Activated CD4-positive, alpha-beta T cell treated with anti-CD3 and anti-CD28 coated beads for 36 hours (primary cell): ENCODE measurements at regions of chr1 and their contacts with region 1.

Region 1: GRCh38 chr1:205227584-205228006 is at the start of gene TMCC2:
- DNase-seq: peak; percentile 92
- ATAC-seq: peak; percentile 81
- H3K4me3 Mint-ChIP-seq: peak within 1 kb of the TSS; percentile 89
- H3K27ac Mint-ChIP-seq: peak within 1 kb of the TSS; percentile 95
- H3K4me1 Mint-ChIP-seq: peaks cover 38% of the 10 kb centered on the region
- H3K27me3 Mint-ChIP-seq: peaks cover 14% of the 10 kb centered on the region
- total RNA-seq, gene TMCC2: 10.5 to 11.0 TPM

Region 2: DNA sequence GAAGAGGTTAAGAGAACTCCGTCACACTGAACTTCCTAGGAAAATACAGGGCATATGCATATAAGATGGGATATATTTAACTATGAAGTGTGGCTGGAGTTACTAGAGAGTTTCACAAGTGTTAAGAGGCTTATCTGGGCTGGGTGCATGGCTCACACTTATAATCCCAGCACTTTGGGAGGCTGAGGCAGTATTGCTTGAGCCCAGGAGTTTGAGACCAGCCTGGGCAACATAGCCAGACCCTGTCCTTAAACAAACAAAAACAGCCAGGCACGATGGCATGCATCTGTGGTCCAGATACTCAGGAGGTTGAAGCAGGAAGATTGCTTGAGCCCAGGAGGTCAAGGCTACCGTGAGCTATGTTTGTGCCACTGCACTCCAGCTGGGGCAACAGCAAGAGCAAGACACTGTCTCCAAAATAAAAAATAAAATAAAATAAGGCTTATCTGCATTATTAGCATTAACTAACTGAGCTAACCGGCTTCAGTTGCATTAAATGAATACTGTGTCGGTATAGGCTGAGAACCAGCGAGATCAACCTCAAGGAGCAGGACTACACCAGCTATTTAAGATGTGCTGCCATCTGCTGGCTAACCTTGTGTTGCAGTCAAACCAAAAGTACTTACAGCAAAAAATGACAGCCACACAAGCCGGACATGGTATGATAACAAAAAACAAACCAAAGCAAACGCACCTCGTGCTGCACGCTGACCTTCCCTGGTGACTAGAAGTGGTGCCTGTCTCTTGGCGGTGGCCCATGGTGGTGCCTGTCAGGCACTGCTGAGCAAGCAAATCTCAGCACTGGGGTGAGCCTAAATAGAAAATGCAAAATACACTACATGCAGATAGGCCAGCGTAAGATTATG is 86.1 kb before region 1 on chr1:
- CTCF ChIA-PET with region 1: interaction called, 17 read pairs
- POLR2A ChIA-PET with region 1: no interaction called
- intact Hi-C with region 1: no loop called
- DNase-seq: peak; percentile 88
- ATAC-seq: peak; percentile 96
- H3K4me3 Mint-ChIP-seq: no peak overlapping the region
- H3K27ac Mint-ChIP-seq: no peak overlapping the region
- H3K4me1 Mint-ChIP-seq: peaks cover 3% of the 10 kb centered on the region
- H3K27me3 Mint-ChIP-seq: no peaks in the 10 kb centered on the region

Region 3: DNA sequence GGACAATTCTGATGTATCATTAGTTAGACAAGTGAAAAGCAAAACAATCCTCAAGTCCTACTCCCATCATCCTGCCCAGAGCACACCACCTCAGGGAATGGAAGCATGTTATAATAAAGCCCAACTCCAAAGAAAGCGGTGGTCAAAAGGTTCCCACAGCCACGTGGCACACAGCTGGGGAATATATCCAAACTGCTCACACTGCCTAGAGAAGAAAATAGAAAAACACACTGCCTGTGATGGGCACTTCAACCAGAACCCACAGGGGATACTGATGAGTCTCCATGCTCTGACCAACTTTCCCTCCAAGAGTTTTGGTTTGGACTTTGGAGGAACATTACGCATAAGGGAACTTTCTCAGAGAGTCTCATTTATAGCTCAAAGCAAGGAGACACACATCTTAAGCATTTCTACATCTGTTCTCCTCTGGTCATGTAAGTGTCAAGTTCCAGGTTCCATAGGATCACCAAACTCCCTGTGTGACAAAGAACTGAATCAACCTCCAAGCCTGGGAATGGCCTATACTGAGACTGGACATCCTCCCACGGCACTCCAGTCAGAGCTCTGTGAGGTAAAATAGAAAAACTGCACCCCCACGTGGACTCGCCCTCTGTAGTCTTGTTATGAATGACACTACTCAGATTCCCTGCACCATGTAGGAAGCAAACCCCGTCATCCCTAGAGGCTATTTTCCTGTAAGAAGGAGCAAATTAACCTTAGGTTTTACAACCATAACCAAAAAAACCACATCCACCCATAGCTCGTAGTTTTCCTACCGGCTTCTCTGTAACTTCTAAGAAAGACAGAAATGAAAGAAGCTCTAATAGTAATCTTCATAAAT is 28.3 kb before region 1 on chr1:
- CTCF ChIA-PET with region 1: interaction called, 23 read pairs
- POLR2A ChIA-PET with region 1: interaction called, 4 read pairs
- intact Hi-C with region 1: loop called in 1 of 2 experiments (anchors 1 kb)
- DNase-seq: peak; percentile 67
- ATAC-seq: peak; percentile 63
- H3K4me3 Mint-ChIP-seq: peak overlapping the region; percentile 50
- H3K27ac Mint-ChIP-seq: peak overlapping the region; percentile 94
- H3K4me1 Mint-ChIP-seq: peaks cover 68% of the 10 kb centered on the region
- H3K27me3 Mint-ChIP-seq: no peaks in the 10 kb centered on the region

Region 4: GRCh38 chr1:205237526-205238484 is 10.2 kb after region 1 on chr1:
- CTCF ChIA-PET with region 1: interaction called, 52 read pairs
- POLR2A ChIA-PET with region 1: interaction called, 6 read pairs
- intact Hi-C with region 1: loop called (anchors 1 kb)
- DNase-seq: peak; percentile 82
- ATAC-seq: peak; percentile 89
- H3K4me3 Mint-ChIP-seq: peak overlapping the region; percentile 56
- H3K27ac Mint-ChIP-seq: peak overlapping the region; percentile 95
- H3K4me1 Mint-ChIP-seq: peaks cover 58% of the 10 kb centered on the region
- H3K27me3 Mint-ChIP-seq: no peaks in the 10 kb centered on the region

Region 5: DNA sequence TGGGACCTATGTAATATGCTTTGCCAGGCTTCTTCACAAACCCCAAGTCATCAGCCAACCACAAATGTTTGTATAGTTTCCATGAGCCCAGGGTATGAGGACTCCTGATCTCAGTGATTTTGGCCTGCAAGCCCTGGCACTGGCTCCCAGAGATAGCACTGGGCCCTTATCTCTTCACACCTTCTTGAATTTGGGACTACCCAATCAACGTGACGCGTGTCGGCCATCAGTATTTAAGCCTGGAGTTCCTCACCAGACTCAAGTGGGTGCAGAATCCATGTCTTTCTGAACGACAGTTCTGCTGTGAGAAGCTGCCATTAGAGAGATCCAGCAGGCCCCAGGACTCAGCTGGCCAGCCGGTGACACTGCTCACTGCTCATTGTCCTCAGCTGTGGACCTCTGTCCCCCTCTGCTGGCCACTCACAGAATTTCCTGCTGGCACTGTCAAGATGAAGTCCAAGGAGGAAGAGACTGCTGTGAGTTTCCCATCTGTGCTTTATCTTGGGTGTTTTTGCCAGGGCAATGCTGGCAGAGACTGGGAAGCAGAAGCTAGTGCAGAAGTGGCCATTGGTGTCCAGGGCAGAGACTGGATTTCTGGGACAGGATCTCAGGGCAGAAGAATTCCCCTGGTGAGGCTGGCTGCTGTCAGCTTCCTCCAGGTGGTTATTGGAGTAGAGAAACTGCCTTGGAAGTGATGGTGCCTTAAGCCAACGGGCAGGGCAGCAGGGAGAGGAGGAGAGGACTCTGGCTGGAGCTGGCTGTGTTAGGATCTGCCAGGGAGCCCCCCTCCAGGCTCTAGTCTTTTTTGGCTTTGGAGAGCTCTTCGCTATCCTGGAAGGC is 28.6 kb after region 1 on chr1:
- CTCF ChIA-PET with region 1: interaction called, 205 read pairs
- POLR2A ChIA-PET with region 1: interaction called, 4 read pairs
- intact Hi-C with region 1: loop called (anchors 1 kb)
- DNase-seq: peak; percentile 93
- ATAC-seq: peak; percentile 95
- H3K4me3 Mint-ChIP-seq: no peak overlapping the region
- H3K27ac Mint-ChIP-seq: no peak overlapping the region
- H3K4me1 Mint-ChIP-seq: peaks cover 2% of the 10 kb centered on the region
- H3K27me3 Mint-ChIP-seq: no peaks in the 10 kb centered on the region

Region 6: DNA sequence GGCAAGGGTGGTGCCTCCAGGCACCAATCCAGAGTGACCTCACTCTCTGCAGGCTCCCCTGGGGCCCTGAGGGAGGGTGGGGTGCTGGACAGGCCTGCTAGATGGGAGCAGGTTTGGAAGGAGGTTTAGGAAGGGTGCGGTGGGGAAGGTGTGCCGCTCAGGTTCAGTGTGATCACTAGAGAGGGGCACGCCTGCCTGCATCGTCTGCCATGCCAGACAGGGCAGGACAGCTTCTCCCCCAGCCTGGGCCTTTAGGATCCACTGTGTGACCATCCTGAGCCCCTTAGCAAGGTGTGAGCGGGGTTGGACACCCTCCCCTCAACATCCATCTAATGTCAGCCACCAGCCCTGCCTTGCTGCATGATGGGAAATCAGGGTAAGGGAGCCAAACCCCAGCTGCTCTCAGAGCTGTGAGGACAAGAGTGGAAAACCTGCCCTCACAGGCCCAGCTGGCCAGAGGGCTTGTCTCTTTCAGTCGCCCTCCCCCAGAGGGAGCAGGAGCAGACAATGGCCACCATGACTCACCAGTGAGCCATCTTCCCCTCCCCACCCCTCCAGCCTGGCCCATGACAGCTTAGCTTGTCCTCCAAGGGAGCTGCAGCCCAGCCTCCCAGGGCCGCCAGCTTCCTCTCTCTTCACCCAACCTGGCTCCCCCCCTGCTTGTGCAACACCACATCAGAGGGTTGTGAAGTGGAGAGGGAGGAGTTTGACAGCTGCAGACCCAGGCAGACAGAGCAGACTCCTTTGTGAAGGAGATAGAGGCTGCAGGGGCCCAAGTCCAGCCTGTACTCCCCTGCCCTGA is 56.9 kb after region 1 on chr1:
- CTCF ChIA-PET with region 1: interaction called, 16 read pairs
- POLR2A ChIA-PET with region 1: no interaction called
- intact Hi-C with region 1: no loop called
- DNase-seq: peak; percentile 92
- ATAC-seq: peak; percentile 73
- H3K4me3 Mint-ChIP-seq: peak overlapping the region; percentile 55
- H3K27ac Mint-ChIP-seq: peak overlapping the region; percentile 92
- H3K4me1 Mint-ChIP-seq: peaks cover 82% of the 10 kb centered on the region
- H3K27me3 Mint-ChIP-seq: no peaks in the 10 kb centered on the region

Region 7: DNA sequence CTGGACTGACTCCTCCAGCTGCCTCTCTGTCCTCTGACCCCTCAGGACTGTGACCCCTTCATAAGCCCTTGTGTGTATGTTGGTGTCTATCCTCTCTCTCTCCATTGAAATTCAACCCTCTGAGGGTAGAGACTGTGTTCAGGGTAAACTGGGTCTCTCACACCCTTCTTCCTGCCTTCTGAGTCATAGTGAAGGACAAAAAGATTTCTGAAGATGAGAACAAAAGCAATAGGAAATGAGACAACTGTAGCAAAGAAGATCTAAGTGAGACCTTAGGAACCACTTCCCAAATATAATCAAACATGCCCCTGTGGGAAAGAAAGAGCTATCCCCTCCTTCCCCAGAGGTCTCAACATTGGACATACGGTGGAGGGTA is 77.1 kb after region 1 on chr1:
- CTCF ChIA-PET with region 1: no interaction called
- POLR2A ChIA-PET with region 1: no interaction called
- intact Hi-C with region 1: no loop called
- DNase-seq: no peak
- ATAC-seq: peak; percentile 51
- H3K4me3 Mint-ChIP-seq: no peak overlapping the region
- H3K27ac Mint-ChIP-seq: peak overlapping the region; percentile 81
- H3K4me1 Mint-ChIP-seq: peaks cover 21% of the 10 kb centered on the region
- H3K27me3 Mint-ChIP-seq: no peaks in the 10 kb centered on the region

Region 8: GRCh38 chr1:205791568-205792180 is 564.1 kb after region 1 on chr1:
- CTCF ChIA-PET with region 1: no interaction called
- POLR2A ChIA-PET with region 1: no interaction called
- intact Hi-C with region 1: no loop called
- DNase-seq: peak; percentile 75
- ATAC-seq: peak; percentile 99
- H3K4me3 Mint-ChIP-seq: no peak overlapping the region
- H3K27ac Mint-ChIP-seq: no peak overlapping the region
- H3K4me1 Mint-ChIP-seq: no peaks in the 10 kb centered on the region
- H3K27me3 Mint-ChIP-seq: no peaks in the 10 kb centered on the region